CD14-positive monocyte (primary cell): ENCODE measurements at regions of chr10 and their contacts with region 1.

Region 1: DNA sequence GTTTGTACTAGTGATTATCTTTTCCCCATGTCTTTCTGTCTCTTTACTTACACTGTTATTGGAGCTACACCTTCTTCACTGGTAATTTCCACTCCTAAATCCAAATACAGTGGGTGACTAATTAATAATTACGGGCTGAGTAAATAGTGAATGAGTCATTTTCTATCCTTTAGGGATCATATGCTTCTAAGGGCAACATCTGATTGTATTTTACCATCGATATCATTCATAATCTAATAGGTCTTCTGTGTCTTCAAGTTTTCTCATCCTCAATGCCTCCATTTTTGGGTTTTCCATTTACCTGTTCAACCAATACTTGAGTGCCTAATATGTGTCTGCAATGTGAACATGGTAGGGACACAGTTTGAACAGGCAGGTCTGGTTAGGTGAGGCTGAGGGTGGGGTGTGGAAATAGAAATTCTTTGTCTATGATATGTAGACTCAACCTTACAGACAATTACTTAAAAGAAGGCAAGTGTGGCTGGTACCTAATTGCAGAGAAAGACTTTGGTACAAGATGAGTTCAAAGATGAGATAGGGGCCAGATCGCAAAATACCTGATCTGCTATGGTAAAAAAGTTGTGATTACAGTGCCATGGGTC is 5.9 kb upstream of the DHX32 start:
- DNase-seq: no peak
- H3K4me3 ChIP-seq: no peak overlapping the region
- H3K4me3 Mint-ChIP-seq: no peak overlapping the region
- H3K27ac ChIP-seq: no peak overlapping the region
- H3K27ac Mint-ChIP-seq: no peak overlapping the region
- H3K4me1 ChIP-seq: no peaks in the 10 kb centered on the region
- H3K4me1 Mint-ChIP-seq: peaks cover 2% of the 10 kb centered on the region
- H3K27me3 ChIP-seq: no peaks in the 10 kb centered on the region
- H3K27me3 Mint-ChIP-seq: no peaks in the 10 kb centered on the region
- CTCF ChIP-seq: no peak

Region 2: DNA sequence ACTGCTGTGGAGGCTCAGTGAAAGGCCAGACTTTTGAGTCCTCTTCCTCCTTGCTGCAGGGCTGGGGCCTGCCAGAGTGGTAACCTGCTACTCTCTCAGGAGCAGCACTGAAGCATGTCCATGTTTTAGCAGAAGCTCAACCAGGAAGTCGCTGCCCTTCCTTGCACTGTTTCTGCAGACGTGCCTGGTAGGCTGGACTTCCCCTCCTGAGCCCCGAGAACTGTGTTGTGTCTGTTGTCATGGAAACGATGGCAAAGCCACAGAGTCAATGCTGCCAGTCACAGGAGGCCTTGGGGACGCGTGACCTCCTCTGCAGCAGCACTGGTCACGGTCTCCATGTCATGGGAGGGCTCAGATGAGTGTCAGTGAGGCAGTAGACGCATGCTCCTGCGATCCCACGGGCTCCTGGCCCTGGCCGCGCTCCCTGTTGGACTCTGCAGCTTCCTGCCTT is 154.8 kb after region 1 on chr10:
- intact Hi-C with region 1: loop called in 1 of 2 experiments (anchors 10 kb)
- DNase-seq: peak; percentile 100
- H3K4me3 ChIP-seq: no peak overlapping the region
- H3K4me3 Mint-ChIP-seq: peak overlapping the region; percentile 69 to 85
- H3K27ac ChIP-seq: peak overlapping the region; percentile 79 to 87
- H3K27ac Mint-ChIP-seq: peak overlapping the region; percentile 97 to 99 (median 98)
- H3K4me1 ChIP-seq: peaks cover 16 to 19% of the 10 kb centered on the region in 2 donors
- H3K4me1 Mint-ChIP-seq: peaks cover 17% of the 10 kb centered on the region
- H3K27me3 ChIP-seq: no peaks in the 10 kb centered on the region
- H3K27me3 Mint-ChIP-seq: peaks cover 0 to 3% (median 0%) of the 10 kb centered on the region in 3 donors
- CTCF ChIP-seq: no peak